Right ventricle myocardium superior (tissue), 1 donor: ENCODE measurements at regions of chr7 and their contacts with region 1.

Region 1: GRCh38 chr7:134782121-134782623 is 2.7 kb downstream of the CALD1 start:
- DNase-seq: no peak
- ATAC-seq: no peak

Region 2: DNA sequence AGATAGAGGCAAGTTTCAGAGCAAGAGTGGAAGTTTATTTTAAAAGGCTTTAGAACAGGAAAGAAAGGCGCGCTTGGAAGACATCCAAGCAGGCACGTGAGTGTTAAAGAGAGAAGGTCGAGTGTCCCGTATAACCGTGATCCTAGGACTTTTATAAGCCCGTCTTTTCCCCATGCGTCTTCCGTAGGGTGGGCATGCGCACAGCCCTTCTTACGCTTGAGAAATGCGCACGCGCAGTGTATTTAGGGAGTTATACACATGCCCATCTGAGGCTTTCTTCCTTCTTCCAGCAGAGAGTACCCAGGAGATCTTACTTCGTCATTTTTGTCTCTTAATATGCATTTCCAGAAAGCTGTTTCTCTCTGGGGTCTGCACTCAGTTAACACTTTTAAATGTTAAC is 49.7 kb after region 1 on chr7:
- intact Hi-C with region 1: loop called (anchors 10 kb)
- DNase-seq: peak; percentile 58
- ATAC-seq: peak; percentile 22